IMR-90 (cell line): ENCODE measurements at regions of chr18 and their contacts with region 1.

Region 1: GRCh38 chr18:5546660-5547059 is 2.9 kb upstream of the EPB41L3 start:
- DNase-seq: peak; percentile 62
- ATAC-seq: peak; percentile 54
- H3K4me3 ChIP-seq: no peak overlapping the region
- H3K27ac ChIP-seq: no peak overlapping the region
- H3K4me1 ChIP-seq: no peaks in the 10 kb centered on the region
- H3K27me3 ChIP-seq: no peaks in the 10 kb centered on the region; the same call in 1 of the 2 replicates
- CTCF ChIP-seq: peak; percentile 61
- POLR2A ChIP-seq: no peak
- RAD21 ChIP-seq: peak; percentile 68

Region 2: GRCh38 chr18:4987452-4988405 is 558.9 kb before region 1 on chr18:
- CTCF ChIA-PET with region 1: no interaction called
- POLR2A ChIA-PET with region 1: no interaction called
- dilution Hi-C with region 1: no loop called
- in situ Hi-C with region 1: no loop called
- intact Hi-C with region 1: no loop called
- DNase-seq: no peak
- ATAC-seq: no peak
- H3K4me3 ChIP-seq: no peak overlapping the region
- H3K27ac ChIP-seq: no peak overlapping the region
- H3K4me1 ChIP-seq: no peaks in the 10 kb centered on the region
- H3K27me3 ChIP-seq: no peaks in the 10 kb centered on the region
- CTCF ChIP-seq: no peak
- POLR2A ChIP-seq: no peak
- RAD21 ChIP-seq: no peak

Region 3: GRCh38 chr18:5295981-5296705 is 250.5 kb before region 1 on chr18:
- CTCF ChIA-PET with region 1: no interaction called
- POLR2A ChIA-PET with region 1: no interaction called
- dilution Hi-C with region 1: no loop called
- in situ Hi-C with region 1: no loop called
- intact Hi-C with region 1: loop called (anchors 2 kb)
- DNase-seq: peak; percentile 96
- ATAC-seq: peak; percentile 79
- H3K4me3 ChIP-seq: peak overlapping the region; percentile 65
- H3K27ac ChIP-seq: peak overlapping the region; percentile 87
- H3K4me1 ChIP-seq: peaks cover 3% of the 10 kb centered on the region
- H3K27me3 ChIP-seq: peaks cover 4% of the 10 kb centered on the region; the same call in 1 of the 2 replicates
- CTCF ChIP-seq: no peak
- POLR2A ChIP-seq: peak; percentile 42
- RAD21 ChIP-seq: no peak

Region 4: GRCh38 chr18:5397102-5397501 is 149.6 kb before region 1 on chr18:
- CTCF ChIA-PET with region 1: no interaction called
- POLR2A ChIA-PET with region 1: no interaction called
- dilution Hi-C with region 1: no loop called
- in situ Hi-C with region 1: no loop called
- intact Hi-C with region 1: no loop called
- DNase-seq: no peak
- ATAC-seq: no peak
- H3K4me3 ChIP-seq: no peak overlapping the region
- H3K27ac ChIP-seq: no peak overlapping the region
- H3K4me1 ChIP-seq: no peaks in the 10 kb centered on the region
- H3K27me3 ChIP-seq: no peaks in the 10 kb centered on the region
- CTCF ChIP-seq: no peak
- POLR2A ChIP-seq: no peak
- RAD21 ChIP-seq: no peak

Region 5: DNA sequence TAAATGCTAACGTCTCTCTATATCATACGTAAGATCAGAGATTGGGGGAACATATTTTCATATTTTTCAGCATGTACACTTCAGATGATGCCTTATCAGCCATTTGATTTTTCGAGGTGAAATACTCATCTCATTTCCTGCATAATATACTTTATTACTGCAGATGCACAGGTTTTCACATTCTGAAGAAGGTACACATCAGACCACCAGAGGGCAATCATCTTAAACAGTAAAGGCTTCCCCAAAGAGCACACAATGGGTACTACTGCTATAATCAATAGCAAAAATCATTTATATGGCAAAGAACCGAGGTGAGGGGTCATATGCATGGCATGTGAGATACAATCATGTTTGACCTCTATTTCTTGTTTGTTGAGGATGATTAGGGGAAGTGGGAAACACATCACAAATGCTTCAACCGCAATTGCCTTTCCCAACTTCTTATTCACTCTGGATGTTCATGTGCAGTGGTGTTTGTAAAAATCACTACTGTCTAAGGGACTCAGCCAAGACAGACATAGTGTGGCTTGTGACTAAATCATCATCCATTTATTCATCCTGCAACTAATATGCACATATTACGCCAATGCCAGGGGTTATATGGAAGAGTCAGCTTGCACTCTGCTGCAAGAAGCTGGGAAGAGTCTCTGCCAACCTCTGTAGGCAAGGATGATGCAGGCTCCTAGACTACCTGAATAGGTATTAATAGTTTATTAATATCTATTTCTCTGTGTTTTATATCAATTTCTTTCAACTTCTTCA is 121.6 kb before region 1 on chr18:
- CTCF ChIA-PET with region 1: no interaction called
- POLR2A ChIA-PET with region 1: no interaction called
- dilution Hi-C with region 1: no loop called
- in situ Hi-C with region 1: no loop called
- intact Hi-C with region 1: loop called (anchors 1 kb)
- DNase-seq: peak; percentile 65
- ATAC-seq: peak; percentile 72; the same call in 1 of the 2 replicates
- H3K4me3 ChIP-seq: no peak overlapping the region
- H3K27ac ChIP-seq: no peak overlapping the region
- H3K4me1 ChIP-seq: no peaks in the 10 kb centered on the region
- H3K27me3 ChIP-seq: no peaks in the 10 kb centered on the region
- CTCF ChIP-seq: peak; percentile 52
- POLR2A ChIP-seq: no peak
- RAD21 ChIP-seq: peak; percentile 49

Region 6: GRCh38 chr18:5456577-5457463 is 89.8 kb before region 1 on chr18:
- CTCF ChIA-PET with region 1: no interaction called
- POLR2A ChIA-PET with region 1: no interaction called
- dilution Hi-C with region 1: no loop called
- in situ Hi-C with region 1: no loop called
- intact Hi-C with region 1: loop called (anchors 1 kb)
- DNase-seq: peak; percentile 62
- ATAC-seq: peak; percentile 89
- H3K4me3 ChIP-seq: no peak overlapping the region
- H3K27ac ChIP-seq: peak overlapping the region; percentile 46
- H3K4me1 ChIP-seq: peaks cover 3% of the 10 kb centered on the region
- H3K27me3 ChIP-seq: no peaks in the 10 kb centered on the region
- CTCF ChIP-seq: peak; percentile 41
- POLR2A ChIP-seq: no peak
- RAD21 ChIP-seq: peak; percentile 42